ENCODE measurements at regions of chr3 and their contacts with region 1.

Region 1: DNA sequence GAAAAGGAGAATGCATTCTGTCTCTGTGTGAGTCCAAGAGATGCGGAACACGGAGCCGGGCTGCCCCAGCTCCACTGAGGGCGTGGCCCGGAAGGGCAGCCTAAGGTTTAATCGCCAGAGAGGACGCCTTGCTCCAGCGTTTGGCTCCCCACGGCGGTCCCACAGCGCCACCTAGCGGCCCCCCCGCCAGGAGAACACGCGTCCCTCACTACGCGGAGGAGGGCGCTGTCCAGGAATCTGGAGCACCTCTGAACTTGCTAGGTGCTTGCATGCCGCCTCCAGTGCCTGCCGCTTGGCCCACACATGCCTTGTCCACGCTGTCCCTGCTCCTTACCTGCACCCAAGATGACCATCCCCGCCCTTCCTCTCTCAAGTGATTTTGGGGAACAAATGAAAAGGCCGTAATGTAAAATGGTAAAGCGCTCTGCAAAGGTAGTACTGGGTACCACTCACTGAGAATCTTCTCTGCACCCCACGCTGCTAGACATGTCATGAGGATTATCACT is 14.4 kb upstream of the MRPS22 start:
- DNase-seq: no peak
- H3K4me3 ChIP-seq: 0 out of 2 replicates have a peak overlapping the region, but pooled peaks have one; percentile 20
- H3K27ac ChIP-seq: no peak overlapping the region
- H3K27me3 ChIP-seq: peaks cover 10% of the 10 kb centered on the region
- CTCF ChIP-seq: peak; percentile 100

Region 2: GRCh38 chr3:138941259-138941885 is 388.0 kb before region 1 on chr3:
- CTCF ChIA-PET with region 1: interaction called, 14 read pairs
- POLR2A ChIA-PET with region 1: no interaction called
- DNase-seq: peak; percentile 11
- H3K4me3 ChIP-seq: no peak overlapping the region
- H3K27ac ChIP-seq: no peak overlapping the region
- H3K27me3 ChIP-seq: peaks cover 93% of the 10 kb centered on the region
- CTCF ChIP-seq: peak; percentile 70

Region 3: GRCh38 chr3:139120086-139121056 is 209.0 kb before region 1 on chr3:
- CTCF ChIA-PET with region 1: interaction called, 15 read pairs
- POLR2A ChIA-PET with region 1: no interaction called
- DNase-seq: peak; percentile 7
- H3K4me3 ChIP-seq: no peak overlapping the region
- H3K27ac ChIP-seq: no peak overlapping the region
- H3K27me3 ChIP-seq: no peaks in the 10 kb centered on the region
- CTCF ChIP-seq: no peak

Region 4: GRCh38 chr3:139261754-139262586 is 67.4 kb before region 1 on chr3:
- CTCF ChIA-PET with region 1: no interaction called
- POLR2A ChIA-PET with region 1: no interaction called
- DNase-seq: no peak
- H3K4me3 ChIP-seq: no peak overlapping the region
- H3K27ac ChIP-seq: no peak overlapping the region
- H3K27me3 ChIP-seq: peaks cover 19% of the 10 kb centered on the region
- CTCF ChIP-seq: no peak

Region 5: GRCh38 chr3:139302084-139302800 is 27.2 kb before region 1 on chr3:
- CTCF ChIA-PET with region 1: interaction called, 11 read pairs
- POLR2A ChIA-PET with region 1: no interaction called
- DNase-seq: peak; percentile 97
- H3K4me3 ChIP-seq: no peak overlapping the region
- H3K27ac ChIP-seq: peak overlapping the region; percentile 89
- H3K27me3 ChIP-seq: no peaks in the 10 kb centered on the region
- CTCF ChIP-seq: no peak

Region 6: GRCh38 chr3:139310474-139310933 is 18.9 kb before region 1 on chr3:
- CTCF ChIA-PET with region 1: interaction called, 31 read pairs
- POLR2A ChIA-PET with region 1: no interaction called
- DNase-seq: peak; percentile 72
- H3K4me3 ChIP-seq: no peak overlapping the region
- H3K27ac ChIP-seq: peak overlapping the region; percentile 87
- H3K27me3 ChIP-seq: no peaks in the 10 kb centered on the region
- CTCF ChIP-seq: no peak

Region 7: DNA sequence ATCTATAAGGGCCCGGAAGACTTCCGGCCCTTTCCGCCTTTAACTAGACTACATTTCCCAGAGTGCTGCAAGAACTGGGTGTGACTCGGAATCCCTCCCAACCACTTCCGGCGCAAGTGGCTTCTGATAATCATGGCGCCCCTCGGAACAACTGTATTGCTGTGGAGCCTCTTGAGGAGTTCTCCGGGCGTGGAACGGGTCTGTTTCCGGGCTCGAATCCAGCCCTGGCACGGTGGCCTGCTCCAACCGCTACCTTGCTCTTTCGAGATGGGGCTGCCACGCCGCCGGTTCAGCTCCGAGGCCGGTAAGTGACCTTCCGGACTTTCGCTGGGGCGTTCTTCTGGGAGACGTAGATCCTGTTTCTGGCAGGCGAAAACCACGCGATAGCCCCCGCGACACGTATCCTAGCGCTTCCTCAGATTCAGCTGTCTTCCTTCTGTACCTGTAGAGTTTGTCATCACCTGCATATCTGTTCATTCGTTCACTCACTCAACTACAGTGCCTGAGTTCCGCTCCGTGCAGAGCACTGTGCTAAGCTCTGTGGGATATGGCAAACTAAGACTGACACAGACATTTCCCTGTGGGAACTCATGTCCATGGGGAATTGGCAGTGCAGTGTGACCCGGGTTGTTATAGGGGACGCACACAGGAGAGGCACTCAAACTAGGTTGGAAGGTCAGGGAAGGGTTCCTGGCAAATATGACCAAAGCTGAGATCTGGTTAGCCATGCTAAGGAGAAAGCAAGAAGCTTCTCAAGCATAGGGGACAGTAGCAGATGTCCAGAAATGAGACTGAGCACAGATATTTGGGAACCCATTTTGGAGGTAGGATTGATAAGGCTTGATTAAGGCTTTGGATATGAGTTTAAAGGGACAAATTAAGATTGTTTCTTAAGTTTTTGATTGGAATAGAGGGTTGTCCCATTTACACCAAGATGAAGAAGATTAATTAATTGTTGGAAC is 14.8 kb after region 1 on chr3 and contains the start of gene MRPS22:
- CTCF ChIA-PET with region 1: interaction called, 15 read pairs
- POLR2A ChIA-PET with region 1: no interaction called
- DNase-seq: peak; percentile 74
- H3K4me3 ChIP-seq: peak within 1 kb of the TSS; percentile 88
- H3K27ac ChIP-seq: peak within 1 kb of the TSS; percentile 83
- H3K27me3 ChIP-seq: no peaks in the 10 kb centered on the region
- CTCF ChIP-seq: no peak
- polyA plus RNA-seq, gene MRPS22: 50.1 and 68.4 TPM in 2 replicates